ENCODE measurements at regions of chr6 and their contacts with region 1.

Region 1: DNA sequence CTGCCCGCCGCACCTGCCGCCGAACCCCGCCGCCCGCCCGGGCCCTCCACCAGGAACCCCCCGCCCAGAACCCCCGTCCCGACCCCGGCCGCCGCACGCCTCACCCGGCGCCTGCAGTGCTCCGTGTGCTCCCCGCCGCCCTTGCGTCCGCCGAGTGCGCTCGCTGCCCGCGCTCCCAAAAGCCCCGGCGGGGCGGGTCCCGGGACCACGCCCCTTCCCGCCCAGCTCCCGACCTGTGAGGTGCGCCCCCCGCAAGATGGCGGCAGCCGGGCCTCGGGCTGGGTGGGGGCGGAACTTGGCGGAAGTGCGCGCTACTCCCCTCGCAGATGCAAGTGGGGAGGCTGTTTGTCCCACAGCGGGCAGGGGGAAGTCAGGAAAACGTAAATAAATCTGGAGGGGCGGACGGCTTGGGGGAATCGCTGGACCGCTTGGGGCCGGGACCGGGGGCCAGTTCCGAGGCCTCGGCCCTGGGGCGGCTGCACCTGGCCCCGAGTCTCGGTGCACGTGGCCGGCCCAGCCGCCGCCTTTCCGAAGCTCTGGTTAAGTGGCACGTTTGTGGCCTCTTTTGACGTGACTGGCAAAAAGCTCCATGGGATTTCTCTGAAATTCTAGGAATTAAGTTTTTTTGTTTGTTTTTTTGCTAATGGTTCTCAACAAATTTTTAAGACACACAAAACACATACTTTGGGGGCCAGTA is at the start of gene EZR:
- DNase-seq: peak; percentile 64 to 95 (median 80)
- ATAC-seq: peak; percentile 58
- H3K4me3 ChIP-seq: peak within 1 kb of the TSS; percentile 88
- H3K4me3 Mint-ChIP-seq: peak within 1 kb of the TSS; percentile 99
- H3K27ac ChIP-seq: peak within 1 kb of the TSS; percentile 96 to 97
- H3K27ac Mint-ChIP-seq: peak within 1 kb of the TSS; percentile 95
- H3K4me1 ChIP-seq: peaks cover 39% of the 10 kb centered on the region
- H3K4me1 Mint-ChIP-seq: peaks cover 49% of the 10 kb centered on the region
- H3K27me3 ChIP-seq: no peaks in the 10 kb centered on the region
- H3K27me3 Mint-ChIP-seq: no peaks in the 10 kb centered on the region
- CTCF ChIP-seq: no peak
- total RNA-seq, gene EZR: 434 to 449 TPM

Region 2: GRCh38 chr6:158778005-158778527 is 41.3 kb before region 1 on chr6:
- CTCF ChIA-PET with region 1: no interaction called
- POLR2A ChIA-PET with region 1: no interaction called
- intact Hi-C with region 1: loop called in 1 of 2 experiments (anchors 5 kb)
- DNase-seq: no peak
- ATAC-seq: no peak
- H3K4me3 ChIP-seq: no peak overlapping the region
- H3K4me3 Mint-ChIP-seq: no peak overlapping the region
- H3K27ac ChIP-seq: no peak overlapping the region
- H3K27ac Mint-ChIP-seq: peak overlapping the region; percentile 47
- H3K4me1 ChIP-seq: peaks cover 26% of the 10 kb centered on the region
- H3K4me1 Mint-ChIP-seq: peaks cover 62% of the 10 kb centered on the region
- H3K27me3 ChIP-seq: no peaks in the 10 kb centered on the region
- H3K27me3 Mint-ChIP-seq: no peaks in the 10 kb centered on the region
- CTCF ChIP-seq: no peak

Region 3: DNA sequence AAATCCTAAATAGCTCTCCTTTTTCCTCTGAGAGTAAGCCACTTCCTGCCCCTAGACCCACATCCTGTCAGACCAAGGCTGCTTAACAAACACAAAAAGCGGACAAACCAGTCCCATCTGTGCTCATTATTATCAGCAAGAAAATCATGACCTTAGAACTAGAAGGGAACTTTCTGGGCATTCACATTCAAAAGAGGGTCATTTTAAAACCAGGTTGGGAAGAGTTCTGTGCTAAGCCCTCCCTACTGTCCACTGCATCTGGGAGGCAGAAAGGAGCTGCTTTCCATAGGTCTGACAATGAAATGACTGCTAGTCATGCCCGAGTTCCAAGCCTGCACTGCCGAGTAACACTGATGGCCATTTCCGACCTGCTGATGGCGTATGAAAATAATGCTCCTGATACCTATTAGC is 15.6 kb before region 1 on chr6:
- CTCF ChIA-PET with region 1: no interaction called
- POLR2A ChIA-PET with region 1: interaction called, 10 read pairs
- intact Hi-C with region 1: loop called in 1 of 2 experiments (anchors 2 kb)
- DNase-seq: peak in 7 of 14 experiments; percentile 29 to 90 (median 45)
- ATAC-seq: peak; percentile 60
- H3K4me3 ChIP-seq: peak overlapping the region; percentile 45
- H3K4me3 Mint-ChIP-seq: peak overlapping the region; percentile 77
- H3K27ac ChIP-seq: peak overlapping the region; percentile 21 to 82
- H3K27ac Mint-ChIP-seq: peak overlapping the region; percentile 75
- H3K4me1 ChIP-seq: peaks cover 80% of the 10 kb centered on the region
- H3K4me1 Mint-ChIP-seq: peaks cover 100% of the 10 kb centered on the region
- H3K27me3 ChIP-seq: no peaks in the 10 kb centered on the region
- H3K27me3 Mint-ChIP-seq: no peaks in the 10 kb centered on the region
- CTCF ChIP-seq: no peak

Region 4: DNA sequence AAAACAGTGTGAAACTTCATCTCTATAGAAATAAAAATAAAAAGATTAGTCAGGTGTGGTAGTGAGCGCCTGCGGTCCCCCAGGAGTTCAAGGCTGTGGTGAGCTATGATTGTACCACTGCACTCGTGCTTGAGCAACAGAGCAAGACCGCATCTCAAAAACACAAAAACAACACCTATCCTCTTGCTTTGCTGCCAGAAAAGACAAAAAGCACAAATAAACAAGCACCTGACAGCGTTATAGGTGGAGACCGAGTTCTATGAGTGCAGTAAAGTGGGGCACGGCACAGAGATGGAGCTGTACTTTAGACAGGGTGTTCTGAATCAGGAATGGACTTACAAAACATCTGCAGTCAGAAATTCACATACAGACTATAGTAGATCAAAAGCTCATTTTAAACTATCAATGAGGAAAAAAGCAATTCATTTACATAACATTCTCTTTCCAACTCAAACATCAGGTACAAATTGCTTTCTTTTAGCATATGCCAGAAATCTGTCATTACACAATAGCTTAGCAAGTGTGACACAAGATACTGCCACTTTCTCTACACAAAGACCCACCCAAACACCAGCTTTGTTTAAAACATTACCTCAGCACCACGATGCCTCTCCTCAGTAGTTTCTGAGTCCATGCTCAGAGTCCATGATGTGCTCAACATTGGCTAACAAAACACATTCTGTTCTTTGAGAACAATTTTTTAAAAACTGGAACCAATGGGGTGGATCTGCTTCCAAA is 10.3 kb before region 1 on chr6:
- CTCF ChIA-PET with region 1: no interaction called
- POLR2A ChIA-PET with region 1: interaction called, 10 read pairs
- intact Hi-C with region 1: no loop called
- DNase-seq: peak in 6 of 14 experiments; percentile 32 to 73 (median 50)
- ATAC-seq: peak; percentile 58
- H3K4me3 ChIP-seq: no peak overlapping the region
- H3K4me3 Mint-ChIP-seq: peak overlapping the region; percentile 60
- H3K27ac ChIP-seq: peak overlapping the region in 1 of 2 donors; percentile 43
- H3K27ac Mint-ChIP-seq: peak overlapping the region; percentile 82
- H3K4me1 ChIP-seq: peaks cover 79% of the 10 kb centered on the region
- H3K4me1 Mint-ChIP-seq: peaks cover 99% of the 10 kb centered on the region
- H3K27me3 ChIP-seq: no peaks in the 10 kb centered on the region
- H3K27me3 Mint-ChIP-seq: no peaks in the 10 kb centered on the region
- CTCF ChIP-seq: no peak

Region 5: DNA sequence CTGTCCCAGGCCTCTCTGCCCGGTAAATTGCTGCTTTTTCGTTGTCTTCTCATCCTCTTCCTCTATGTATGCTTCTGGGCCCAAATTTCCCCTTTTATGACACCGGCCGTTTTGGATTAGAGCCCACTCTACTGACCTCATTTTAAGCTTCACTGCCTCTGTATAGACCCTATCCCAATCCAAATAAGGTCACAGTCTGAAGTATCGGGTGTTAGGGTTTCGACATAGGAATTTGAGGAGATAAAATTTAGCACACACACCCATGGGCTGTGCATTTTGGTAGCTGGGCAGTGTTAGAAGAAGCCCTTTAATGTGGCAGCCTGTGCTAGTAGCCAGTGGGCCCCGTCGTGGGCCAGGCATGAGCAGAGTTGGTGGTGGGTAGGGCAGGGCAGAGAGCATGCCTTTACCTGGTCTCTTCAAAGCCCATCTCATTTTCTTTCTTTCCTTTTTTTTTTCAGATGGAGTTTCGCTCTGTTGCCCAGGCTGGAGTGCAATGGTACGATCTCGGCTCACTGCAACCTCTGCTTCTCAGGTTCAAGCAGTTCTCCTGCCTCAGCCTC is 27.7 kb after region 1 on chr6:
- CTCF ChIA-PET with region 1: interaction called, 3 read pairs
- POLR2A ChIA-PET with region 1: interaction called, 7 read pairs
- intact Hi-C with region 1: loop called (anchors 1 to 2 kb)
- DNase-seq: no peak
- ATAC-seq: no peak
- H3K4me3 ChIP-seq: no peak overlapping the region
- H3K4me3 Mint-ChIP-seq: no peak overlapping the region
- H3K27ac ChIP-seq: no peak overlapping the region
- H3K27ac Mint-ChIP-seq: no peak overlapping the region
- H3K4me1 ChIP-seq: peaks cover 18% of the 10 kb centered on the region
- H3K4me1 Mint-ChIP-seq: peaks cover 21% of the 10 kb centered on the region
- H3K27me3 ChIP-seq: no peaks in the 10 kb centered on the region
- H3K27me3 Mint-ChIP-seq: no peaks in the 10 kb centered on the region
- CTCF ChIP-seq: no peak

Region 6: GRCh38 chr6:158853072-158853871 is 33.9 kb after region 1 on chr6:
- CTCF ChIA-PET with region 1: interaction called, 8 read pairs
- POLR2A ChIA-PET with region 1: interaction called, 20 read pairs
- intact Hi-C with region 1: loop called (anchors 1 kb)
- DNase-seq: peak; percentile 73 to 97 (median 86)
- ATAC-seq: peak; percentile 70
- H3K4me3 ChIP-seq: peak overlapping the region; percentile 53
- H3K4me3 Mint-ChIP-seq: no peak overlapping the region
- H3K27ac ChIP-seq: peak overlapping the region; percentile 86 to 97
- H3K27ac Mint-ChIP-seq: no peak overlapping the region
- H3K4me1 ChIP-seq: peaks cover 67% of the 10 kb centered on the region
- H3K4me1 Mint-ChIP-seq: peaks cover 27% of the 10 kb centered on the region
- H3K27me3 ChIP-seq: no peaks in the 10 kb centered on the region
- H3K27me3 Mint-ChIP-seq: no peaks in the 10 kb centered on the region
- CTCF ChIP-seq: no peak

Region 7: DNA sequence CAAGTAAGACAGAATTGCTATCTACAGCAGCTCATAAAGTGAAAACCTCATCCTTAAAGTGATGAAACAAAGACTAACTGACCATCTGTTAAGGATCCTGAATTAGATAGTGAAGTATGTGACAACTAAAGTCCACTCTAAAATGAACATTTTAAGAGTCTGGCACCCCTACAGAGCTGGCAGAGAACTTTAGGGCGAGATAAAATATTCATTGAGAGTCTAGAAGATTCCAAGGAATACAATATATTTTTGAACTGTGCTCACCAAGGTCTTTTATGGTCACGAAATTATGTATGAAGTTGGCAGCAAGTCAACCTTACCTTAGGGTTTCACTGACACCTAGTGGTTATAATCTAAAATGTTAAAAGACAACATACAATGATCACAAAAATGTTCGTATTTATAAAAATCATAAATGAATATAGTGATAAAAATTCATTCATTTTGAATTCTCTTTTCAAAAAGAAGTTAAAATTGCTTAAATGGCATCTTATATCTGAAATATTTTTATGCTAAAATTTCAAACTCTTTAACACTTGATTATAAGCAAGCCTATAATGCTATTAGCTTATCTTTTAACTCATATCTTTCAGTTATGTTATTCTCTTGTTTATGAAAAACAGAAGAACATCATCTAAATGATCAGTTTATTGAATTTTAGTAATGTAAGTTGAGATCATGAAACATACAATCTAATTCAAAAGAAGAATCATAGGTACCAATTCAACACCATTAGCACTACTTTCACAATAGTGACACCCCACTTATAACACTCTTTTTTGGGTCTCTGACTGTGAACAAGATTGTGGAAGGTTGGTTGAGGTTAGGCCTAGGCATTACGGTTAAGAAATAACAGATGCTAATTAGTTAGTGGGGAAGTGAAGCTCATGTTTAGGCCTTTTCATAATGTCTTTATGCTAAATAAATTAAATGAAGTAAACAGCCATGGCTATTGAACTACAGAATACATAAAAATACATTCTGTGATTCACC is 153.2 kb after region 1 on chr6:
- CTCF ChIA-PET with region 1: no interaction called
- POLR2A ChIA-PET with region 1: no interaction called
- intact Hi-C with region 1: loop called in 1 of 2 experiments (anchors 2 kb)
- DNase-seq: peak in 3 of 14 experiments; percentile 70 to 78 (median 78)
- ATAC-seq: peak; percentile 61
- H3K4me3 ChIP-seq: no peak overlapping the region
- H3K4me3 Mint-ChIP-seq: no peak overlapping the region
- H3K27ac ChIP-seq: no peak overlapping the region
- H3K27ac Mint-ChIP-seq: no peak overlapping the region
- H3K4me1 ChIP-seq: no peaks in the 10 kb centered on the region
- H3K4me1 Mint-ChIP-seq: peaks cover 4% of the 10 kb centered on the region
- H3K27me3 ChIP-seq: no peaks in the 10 kb centered on the region
- H3K27me3 Mint-ChIP-seq: no peaks in the 10 kb centered on the region
- CTCF ChIP-seq: peak; percentile 88

Region 8: DNA sequence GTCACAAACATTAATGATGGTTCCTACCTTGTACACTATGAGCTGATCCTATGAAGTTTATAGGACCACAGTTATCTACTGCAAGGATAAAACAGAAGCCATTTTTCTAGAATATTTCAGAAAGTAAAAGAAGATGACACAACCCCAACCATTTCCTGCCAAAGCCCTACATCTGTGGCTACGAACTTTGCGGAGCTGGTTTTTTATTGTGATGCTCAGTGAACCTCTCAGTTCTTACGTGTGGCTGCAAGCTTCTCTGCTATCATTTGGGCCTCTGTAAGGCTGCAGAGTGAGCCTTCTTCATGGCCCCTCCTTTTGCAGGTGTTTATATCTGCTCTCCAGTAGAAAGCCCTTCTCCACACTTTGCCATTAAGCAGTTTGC is 243.2 kb after region 1 on chr6:
- CTCF ChIA-PET with region 1: no interaction called
- POLR2A ChIA-PET with region 1: no interaction called
- intact Hi-C with region 1: no loop called
- DNase-seq: peak in 13 of 14 experiments; percentile 27 to 90 (median 56)
- ATAC-seq: peak; percentile 89
- H3K4me3 ChIP-seq: peak overlapping the region; percentile 17
- H3K4me3 Mint-ChIP-seq: peak overlapping the region; percentile 67
- H3K27ac ChIP-seq: peak overlapping the region; percentile 84 to 90
- H3K27ac Mint-ChIP-seq: peak overlapping the region; percentile 96
- H3K4me1 ChIP-seq: peaks cover 63% of the 10 kb centered on the region
- H3K4me1 Mint-ChIP-seq: peaks cover 86% of the 10 kb centered on the region
- H3K27me3 ChIP-seq: no peaks in the 10 kb centered on the region
- H3K27me3 Mint-ChIP-seq: no peaks in the 10 kb centered on the region
- CTCF ChIP-seq: no peak

Measured in CD4-positive, alpha-beta T cell (primary cell).